ENCODE measurements at regions of chr12 and their contacts with region 1.

Region 1: GRCh38 chr12:52023182-52023975 is 16.6 kb downstream of the TAMALIN start:
- DNase-seq: peak; percentile 62 to 88 (median 85)
- H3K4me3 ChIP-seq: peak overlapping the region; percentile 42 to 75 (median 62)
- H3K27ac ChIP-seq: peak overlapping the region in 56 of 59 donors; percentile 14 to 96 (median 82)
- H3K27me3 ChIP-seq: no peaks in the 10 kb centered on the region
- CTCF ChIP-seq: peak; percentile 82 to 100 (median 97)

Region 2: DNA sequence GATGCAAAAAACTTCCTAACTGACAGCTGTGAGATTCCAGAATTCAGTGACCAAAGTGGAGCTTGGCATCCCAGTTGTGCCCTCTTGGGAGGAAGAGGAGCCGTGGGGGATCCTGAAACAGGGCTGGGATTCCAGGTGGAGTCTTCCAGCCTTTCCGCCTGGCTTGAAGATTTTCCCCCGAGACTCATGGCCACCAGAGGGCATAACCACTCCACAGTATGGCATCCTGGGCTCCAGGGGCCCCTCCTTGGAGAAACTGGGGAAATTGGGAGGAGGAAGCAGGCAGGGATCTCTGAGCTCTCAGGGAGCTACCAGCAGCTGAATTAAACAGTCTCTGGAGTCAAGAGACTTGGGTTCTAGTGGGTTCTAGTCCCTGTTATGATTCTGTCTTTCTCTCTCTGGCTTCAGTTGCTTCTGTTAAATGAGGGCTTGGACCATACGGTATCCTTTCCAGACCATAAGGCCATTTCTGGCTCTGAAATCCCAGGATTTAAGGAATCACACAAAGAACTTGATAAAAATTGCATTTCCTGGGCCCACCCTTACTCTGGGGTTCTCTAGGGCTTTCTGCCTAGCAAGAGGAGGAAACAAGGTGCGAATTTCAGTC is 19.2 kb before region 1 on chr12:
- intact Hi-C with region 1: loop called (anchors 1 kb)
- DNase-seq: peak in 8 of 10 donors; percentile 50 to 84 (median 79)
- H3K4me3 ChIP-seq: no peak overlapping the region
- H3K27ac ChIP-seq: peak overlapping the region in 41 of 59 donors; percentile 0 to 95 (median 33)
- H3K27me3 ChIP-seq: peaks cover 0 to 13% (median 0%) of the 10 kb centered on the region in 45 donors
- CTCF ChIP-seq: peak; percentile 67 to 96 (median 87)

Region 3: DNA sequence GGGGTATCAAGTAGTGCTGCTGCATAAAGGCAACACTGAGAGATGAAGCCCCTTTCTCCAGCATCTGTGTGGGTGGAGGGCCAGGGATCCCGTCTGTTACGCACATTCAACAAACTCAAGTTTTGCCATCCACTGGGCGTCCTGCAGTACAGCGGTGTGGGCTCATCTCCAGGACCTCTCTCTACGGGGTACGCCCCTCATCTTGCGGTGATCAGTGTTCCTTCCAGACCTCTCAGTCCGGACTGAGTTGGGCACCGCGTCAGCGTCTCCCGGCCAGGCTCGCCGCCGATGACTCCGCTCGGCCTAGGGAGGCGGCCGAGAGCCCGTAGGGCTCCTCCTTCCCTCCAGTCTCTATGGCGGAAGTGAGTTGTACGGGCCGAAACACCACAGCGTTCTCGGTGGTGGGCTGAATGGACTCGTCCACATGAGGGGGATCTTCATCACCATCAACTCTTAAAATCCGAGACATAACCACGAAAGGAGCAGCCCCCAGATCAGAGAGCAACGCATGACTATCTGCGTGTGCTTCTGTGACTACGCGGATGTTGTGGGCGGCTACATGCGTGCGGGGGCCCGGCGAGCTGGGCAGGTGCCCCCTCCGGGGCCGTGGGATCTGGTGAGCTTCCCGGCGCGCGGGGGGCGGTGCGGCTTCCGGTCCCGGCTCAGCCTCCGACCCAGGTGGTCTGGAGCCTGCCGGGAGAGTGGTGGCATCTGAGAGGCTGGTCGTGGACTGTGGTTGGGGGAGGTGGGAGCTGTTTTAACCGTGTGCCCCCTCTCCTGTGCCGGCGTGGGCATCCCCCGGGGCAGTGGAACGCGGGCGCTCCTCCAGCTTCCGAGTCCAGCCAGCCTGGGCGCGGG is 46.2 kb after region 1 on chr12 and contains the start of gene ATG101:
- intact Hi-C with region 1: loop called in 1 of 2 experiments (anchors 2 kb)
- DNase-seq: peak; percentile 77 to 93 (median 89)
- H3K4me3 ChIP-seq: peak within 1 kb of the TSS; percentile 67 to 100 (median 93)
- H3K27ac ChIP-seq: peak within 1 kb of the TSS; percentile 72 to 99 (median 95)
- H3K27me3 ChIP-seq: no peaks in the 10 kb centered on the region
- CTCF ChIP-seq: peak; percentile 46 to 94 (median 84)
- total RNA-seq, gene ATG101: 19.6 to 42.5 (median 31.5) TPM

Region 4: DNA sequence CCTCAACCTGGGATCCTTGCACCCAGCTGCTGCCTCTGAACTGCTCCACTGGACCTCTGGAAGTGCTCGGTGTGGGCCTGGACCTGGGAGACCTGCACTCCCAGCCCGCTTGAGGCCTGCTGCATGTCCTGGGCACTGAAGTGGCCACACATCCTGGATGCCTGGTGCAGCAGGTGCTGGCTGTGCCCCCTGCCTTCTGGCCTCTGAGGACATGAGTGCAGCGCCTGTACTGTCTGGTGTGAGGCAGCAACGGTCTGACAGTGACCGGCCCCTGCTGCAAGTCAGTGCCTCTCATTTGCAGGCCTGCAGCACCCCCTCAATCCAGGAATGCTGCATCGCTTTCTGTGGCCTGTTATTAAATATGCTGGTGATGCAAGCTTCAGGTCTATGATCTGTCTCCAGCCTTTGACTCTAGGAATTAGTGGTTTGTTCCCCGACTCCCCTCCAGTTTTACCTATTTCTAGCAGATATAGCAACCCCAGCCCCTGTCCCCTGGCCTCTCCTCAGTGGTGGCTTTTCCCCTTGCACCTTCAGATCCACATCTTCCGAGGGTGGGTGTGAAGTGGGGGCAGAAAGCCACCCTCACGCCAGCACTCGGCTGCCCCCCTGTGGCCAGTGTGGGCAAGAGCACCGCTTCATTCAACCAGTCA is 59.7 kb after region 1 on chr12:
- intact Hi-C with region 1: loop called (anchors 1 kb)
- DNase-seq: peak in 8 of 10 donors; percentile 35 to 79 (median 60)
- H3K4me3 ChIP-seq: no peak overlapping the region
- H3K27ac ChIP-seq: peak overlapping the region in 25 of 59 donors; percentile 0 to 69 (median 38)
- H3K27me3 ChIP-seq: peaks cover 0 to 3% (median 0%) of the 10 kb centered on the region in 45 donors
- CTCF ChIP-seq: peak; percentile 90 to 99 (median 98)

Region 5: GRCh38 chr12:52175371-52176350 is 152.3 kb after region 1 on chr12:
- intact Hi-C with region 1: no loop called
- DNase-seq: no peak
- H3K4me3 ChIP-seq: no peak overlapping the region
- H3K27ac ChIP-seq: peak overlapping the region in 1 of 59 donors; percentile 6
- H3K27me3 ChIP-seq: no peaks in the 10 kb centered on the region
- CTCF ChIP-seq: no peak

Measured in dorsolateral prefrontal cortex (tissue), 120 donors.